ENCODE measurements at regions of chr3 and their contacts with region 1.

Region 1: DNA sequence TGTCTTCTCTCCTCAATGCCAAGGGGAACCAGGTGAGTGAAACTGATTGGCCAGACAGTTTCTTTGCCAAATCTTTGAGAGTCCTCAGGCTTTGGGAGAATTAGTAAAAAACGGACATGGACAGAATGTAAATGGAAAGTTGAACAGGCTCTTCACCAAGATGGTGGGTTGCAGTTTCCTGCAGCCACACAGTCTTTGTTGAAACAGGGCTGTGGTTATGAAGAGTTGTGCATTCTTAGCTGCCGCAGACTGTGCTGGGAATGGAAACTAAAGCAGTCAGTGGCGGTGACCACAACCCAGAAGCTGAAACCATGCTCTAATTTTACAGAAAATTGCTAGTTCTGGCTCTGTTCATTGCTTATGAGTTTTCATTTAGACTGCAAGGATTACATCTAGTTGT is 42.1 kb upstream of the TASOR start:
- DNase-seq: peak; percentile 68
- H3K4me3 Mint-ChIP-seq: peak overlapping the region; percentile 81
- H3K27ac Mint-ChIP-seq: peak overlapping the region; percentile 93
- H3K4me1 Mint-ChIP-seq: peaks cover 69% of the 10 kb centered on the region
- H3K27me3 Mint-ChIP-seq: no peaks in the 10 kb centered on the region

Region 2: GRCh38 chr3:56693750-56694149 is 31.4 kb before region 1 on chr3:
- intact Hi-C with region 1: loop called (anchors 1 kb)
- DNase-seq: no peak
- H3K4me3 Mint-ChIP-seq: peak overlapping the region; percentile 54
- H3K27ac Mint-ChIP-seq: no peak overlapping the region
- H3K4me1 Mint-ChIP-seq: peaks cover 37% of the 10 kb centered on the region
- H3K27me3 Mint-ChIP-seq: no peaks in the 10 kb centered on the region

Region 3: GRCh38 chr3:56702490-56703315 is 22.5 kb before region 1 on chr3:
- intact Hi-C with region 1: loop called (anchors 2 kb)
- DNase-seq: no peak
- H3K4me3 Mint-ChIP-seq: no peak overlapping the region
- H3K27ac Mint-ChIP-seq: no peak overlapping the region
- H3K4me1 Mint-ChIP-seq: peaks cover 29% of the 10 kb centered on the region
- H3K27me3 Mint-ChIP-seq: no peaks in the 10 kb centered on the region

Region 4: DNA sequence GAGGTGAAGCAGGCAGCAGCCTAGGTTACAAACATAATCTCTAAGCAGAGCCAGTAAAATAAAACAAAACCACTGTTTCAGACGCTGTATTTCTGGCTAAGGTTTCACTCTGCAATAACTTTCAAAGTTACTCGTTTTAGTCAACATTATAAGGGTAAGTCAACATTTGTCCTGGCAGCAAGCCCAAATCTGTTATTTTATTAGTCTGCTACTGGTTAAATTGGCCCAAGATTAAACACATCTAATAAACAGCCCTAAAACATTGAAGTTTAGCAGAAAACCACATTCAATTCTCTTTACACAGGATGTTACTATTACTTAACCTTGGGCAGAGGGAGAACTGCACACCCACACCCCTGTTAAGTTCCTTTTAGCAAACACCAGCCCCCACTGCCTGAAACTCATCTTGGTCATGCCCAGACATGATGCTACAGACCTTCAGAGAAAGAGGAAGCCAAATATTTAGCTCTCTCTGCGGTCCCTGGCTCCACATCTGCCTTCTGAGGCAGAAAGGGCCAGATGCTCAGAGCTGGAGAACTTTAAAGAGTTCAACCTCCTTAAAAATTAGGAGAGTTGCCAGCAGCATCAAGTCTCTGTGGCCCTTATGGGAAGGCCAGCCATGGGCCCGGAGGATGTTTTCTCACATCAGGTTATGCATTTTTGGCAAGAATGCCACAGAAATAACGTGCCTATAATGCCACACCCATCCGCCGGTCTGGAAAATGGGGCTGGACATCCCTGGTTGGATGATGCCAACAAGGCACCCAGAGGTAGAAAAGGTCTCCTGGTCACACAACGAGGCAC is 58.7 kb after region 1 on chr3:
- intact Hi-C with region 1: loop called (anchors 1 kb)
- DNase-seq: peak; percentile 72
- H3K4me3 Mint-ChIP-seq: peak overlapping the region; percentile 81
- H3K27ac Mint-ChIP-seq: peak overlapping the region; percentile 95
- H3K4me1 Mint-ChIP-seq: peaks cover 97% of the 10 kb centered on the region
- H3K27me3 Mint-ChIP-seq: no peaks in the 10 kb centered on the region

Region 5: GRCh38 chr3:56976651-56977560 is 251.7 kb after region 1 on chr3:
- intact Hi-C with region 1: no loop called
- DNase-seq: no peak
- H3K4me3 Mint-ChIP-seq: no peak overlapping the region
- H3K27ac Mint-ChIP-seq: no peak overlapping the region
- H3K4me1 Mint-ChIP-seq: peaks cover 17% of the 10 kb centered on the region
- H3K27me3 Mint-ChIP-seq: peaks cover 10% of the 10 kb centered on the region

Measured in activated T-helper 1 cell treated with anti-CD3 and anti-CD28 coated beads, Interleukin-12 subunit alpha, Interleukin-12 subunit beta, Interleukin-2, Interleukin-4 antibody, amounts not matched to agents 30 ng/mL and 10 ng/mL and 1 ng/mL, durations not matched to agents 14 hours and 24 hours and 36 hours (primary cell).